HepG2 (cell line): ENCODE measurements at regions of chr6 and their contacts with region 1.

Region 1: GRCh38 chr6:84033523-84034451 is at the start of gene MRAP2:
- DNase-seq: no peak
- ATAC-seq: peak; percentile 92
- H3K4me3 ChIP-seq: peak within 1 kb of the TSS; percentile 60 to 79 (median 72)
- H3K27ac ChIP-seq: no peak within 1 kb of the TSS
- H3K4me1 ChIP-seq: 0 out of 2 replicates have a peak, but pooled peaks cover 5% of the 10 kb centered on the region
- H3K27me3 ChIP-seq: peaks cover 1 to 30% of the 10 kb centered on the region in 2 experiments
- CTCF ChIP-seq: no peak
- EP300 ChIP-seq: no peak
- POLR2A ChIP-seq: no peak
- RAD21 ChIP-seq: peak; percentile 38; the same call in 1 of the 2 replicates
- total RNA-seq, gene MRAP2: 3.5 and 3.8 TPM in 2 replicates

Region 2: GRCh38 chr6:83952830-83953229 is 81.0 kb before region 1 on chr6:
- CTCF ChIA-PET with region 1: no interaction called
- POLR2A ChIA-PET with region 1: no interaction called
- in situ Hi-C with region 1: no loop called
- intact Hi-C with region 1: no loop called
- DNase-seq: no peak
- ATAC-seq: no peak
- H3K4me3 ChIP-seq: no peak overlapping the region
- H3K27ac ChIP-seq: no peak overlapping the region
- H3K4me1 ChIP-seq: 0 out of 2 replicates have a peak, but pooled peaks cover 5% of the 10 kb centered on the region
- H3K27me3 ChIP-seq: no peaks in the 10 kb centered on the region
- CTCF ChIP-seq: no peak
- EP300 ChIP-seq: no peak
- POLR2A ChIP-seq: no peak
- RAD21 ChIP-seq: no peak

Region 3: GRCh38 chr6:84074988-84075781 is 41.4 kb after region 1 on chr6:
- CTCF ChIA-PET with region 1: no interaction called
- POLR2A ChIA-PET with region 1: no interaction called
- in situ Hi-C with region 1: no loop called
- intact Hi-C with region 1: no loop called
- DNase-seq: no peak
- ATAC-seq: no peak
- H3K4me3 ChIP-seq: no peak overlapping the region
- H3K27ac ChIP-seq: no peak overlapping the region
- H3K4me1 ChIP-seq: no peaks in the 10 kb centered on the region
- H3K27me3 ChIP-seq: no peaks in the 10 kb centered on the region
- CTCF ChIP-seq: no peak
- EP300 ChIP-seq: no peak
- POLR2A ChIP-seq: no peak
- RAD21 ChIP-seq: no peak

Region 4: DNA sequence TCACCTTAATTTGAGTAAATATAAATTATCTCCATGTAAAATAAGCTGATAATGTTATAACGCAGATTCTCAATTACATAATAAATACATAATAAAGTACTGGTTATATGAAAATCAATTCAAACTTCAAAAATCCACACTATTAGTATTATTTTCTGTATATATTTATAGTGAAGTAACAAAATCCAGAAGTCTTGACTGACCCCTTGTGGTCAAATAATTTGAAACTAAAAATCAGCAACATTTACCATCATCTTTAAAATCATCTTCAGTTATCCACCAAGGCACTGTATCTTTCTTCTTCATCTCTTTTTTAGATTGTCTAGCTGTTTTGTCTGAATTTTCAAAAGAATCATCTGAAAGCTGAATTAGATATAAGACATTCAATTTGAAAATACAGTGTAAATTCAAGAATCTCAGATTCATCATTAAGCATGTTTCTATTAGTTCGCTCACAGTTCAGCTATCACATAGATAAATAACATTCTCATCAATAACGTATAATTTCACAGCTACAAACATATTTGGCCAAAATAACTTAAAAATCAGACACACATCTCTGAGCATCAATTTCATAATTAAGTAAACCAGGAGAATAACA is 187.1 kb after region 1 on chr6:
- CTCF ChIA-PET with region 1: no interaction called
- POLR2A ChIA-PET with region 1: no interaction called
- in situ Hi-C with region 1: no loop called
- intact Hi-C with region 1: loop called (anchors 5 kb)
- DNase-seq: no peak
- ATAC-seq: no peak
- H3K4me3 ChIP-seq: no peak overlapping the region
- H3K27ac ChIP-seq: no peak overlapping the region
- H3K4me1 ChIP-seq: peaks cover 3% of the 10 kb centered on the region
- H3K27me3 ChIP-seq: no peaks in the 10 kb centered on the region
- CTCF ChIP-seq: peak; percentile 41
- EP300 ChIP-seq: no peak
- POLR2A ChIP-seq: no peak
- RAD21 ChIP-seq: no peak